ENCODE measurements at regions of chr1 and their contacts with region 1.

Region 1: GRCh38 chr1:220272047-220272840 is at the start of gene RAB3GAP2:
- DNase-seq: peak; percentile 100
- H3K27ac ChIP-seq: peak within 1 kb of the TSS; percentile 83
- CTCF ChIP-seq: no peak

Region 2: GRCh38 chr1:220300442-220301121 is 28.3 kb after region 1 on chr1:
- CTCF ChIA-PET with region 1: interaction called, 11 read pairs
- POLR2A ChIA-PET with region 1: no interaction called
- DNase-seq: peak; percentile 70
- H3K27ac ChIP-seq: peak overlapping the region; percentile 29; the same call in 1 of the 2 replicates
- CTCF ChIP-seq: no peak